Stomach (tissue), 19 donors: ENCODE measurements at regions of chr19 and their contacts with region 1.

Region 1: GRCh38 chr19:9796113-9796773 is 22.6 kb downstream of the FBXL12 start:
- DNase-seq: peak; percentile 84 to 95
- H3K4me3 ChIP-seq: no peak overlapping the region
- H3K27ac ChIP-seq: peak overlapping the region in 1 of 5 donors; percentile 6
- H3K4me1 ChIP-seq: peaks cover 0 to 18% (median 6%) of the 10 kb centered on the region in 4 donors
- H3K27me3 ChIP-seq: no peaks in the 10 kb centered on the region
- CTCF ChIP-seq: peak in 5 of 7 experiments; percentile 53 to 81 (median 63)
- EP300 ChIP-seq: no peak
- POLR2A ChIP-seq: no peak

Region 2: DNA sequence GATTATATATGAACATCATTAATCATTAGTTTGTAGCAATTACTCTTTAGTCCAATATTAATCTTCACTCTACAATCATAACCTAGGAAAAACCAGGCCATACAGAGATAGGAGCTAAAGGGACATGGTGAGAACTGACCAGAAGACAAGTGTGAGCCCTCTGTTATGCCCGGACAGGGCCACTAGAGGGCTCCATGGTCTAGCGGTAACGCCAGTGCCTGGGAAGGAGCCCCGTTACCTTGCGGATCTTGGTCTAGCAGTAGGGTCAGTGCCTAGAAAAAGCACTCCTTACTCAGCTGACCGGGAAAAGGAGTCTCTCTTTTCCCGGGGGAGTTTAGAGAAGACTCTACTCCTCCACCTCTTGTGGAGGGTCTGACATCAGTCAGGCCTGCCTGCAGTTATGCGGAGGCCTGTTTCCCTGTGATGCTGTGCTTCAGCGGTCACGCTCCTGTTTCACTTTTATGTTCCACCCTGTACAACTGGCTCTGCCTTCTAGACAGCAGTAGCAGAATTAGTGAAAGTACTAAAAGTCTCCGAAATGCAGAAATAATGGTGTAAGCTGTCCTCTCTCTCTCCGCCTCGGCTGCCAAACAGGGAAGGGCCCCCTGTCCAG is 590.6 kb before region 1 on chr19:
- intact Hi-C with region 1: loop called (anchors 10 kb)
- DNase-seq: peak; percentile 73 to 84
- H3K4me3 ChIP-seq: peak overlapping the region in 3 of 4 donors; percentile 28 to 33 (median 29)
- H3K27ac ChIP-seq: no peak overlapping the region
- H3K4me1 ChIP-seq: peaks cover 0 to 5% (median 2%) of the 10 kb centered on the region in 4 donors
- H3K27me3 ChIP-seq: peaks cover 0 to 3% (median 0%) of the 10 kb centered on the region in 3 donors
- CTCF ChIP-seq: peak in 5 of 7 experiments; percentile 66 to 92 (median 79)
- EP300 ChIP-seq: no peak
- POLR2A ChIP-seq: no peak

Region 3: GRCh38 chr19:9584073-9584833 is 212.0 kb before region 1 on chr19 and contains the start of gene ZNF121:
- intact Hi-C with region 1: loop called (anchors 10 kb)
- DNase-seq: peak; percentile 85 to 96
- H3K4me3 ChIP-seq: peak within 1 kb of the TSS; percentile 68 to 90 (median 80)
- H3K27ac ChIP-seq: peak within 1 kb of the TSS; percentile 88 to 96 (median 93)
- H3K4me1 ChIP-seq: peaks cover 8 to 28% (median 19%) of the 10 kb centered on the region in 4 donors
- H3K27me3 ChIP-seq: peaks cover 0 to 13% (median 0%) of the 10 kb centered on the region in 3 donors
- CTCF ChIP-seq: peak in 1 of 7 experiments; percentile 14
- EP300 ChIP-seq: peak; percentile 24
- POLR2A ChIP-seq: no peak
- total RNA-seq, gene ZNF121: 4.1 to 72.4 (median 27.4) TPM

Region 4: DNA sequence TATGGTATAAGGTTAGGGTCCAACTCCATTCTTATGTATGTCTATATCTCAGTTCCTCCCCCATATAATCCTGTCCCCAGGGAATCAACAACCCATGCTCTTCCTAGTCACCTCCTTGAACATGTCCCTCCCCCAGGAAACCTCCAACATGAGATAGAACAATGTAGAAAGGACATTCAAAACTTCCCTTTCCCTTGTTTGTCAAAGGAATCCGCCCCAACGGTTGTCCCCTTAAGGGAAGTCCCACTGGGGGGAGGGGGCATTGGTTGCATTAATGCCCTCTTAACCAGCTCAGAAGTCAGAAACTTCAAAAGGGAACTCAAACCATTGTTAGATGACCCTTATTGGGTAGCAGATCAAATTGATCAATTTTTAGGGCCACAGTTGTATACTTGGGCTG is 168.4 kb before region 1 on chr19:
- intact Hi-C with region 1: loop called (anchors 5 kb)
- DNase-seq: no peak
- H3K4me3 ChIP-seq: no peak overlapping the region
- H3K27ac ChIP-seq: no peak overlapping the region
- H3K4me1 ChIP-seq: peaks cover 0 to 10% (median 2%) of the 10 kb centered on the region in 4 donors
- H3K27me3 ChIP-seq: no peaks in the 10 kb centered on the region
- CTCF ChIP-seq: no peak
- EP300 ChIP-seq: no peak
- POLR2A ChIP-seq: no peak